Endothelial cell of umbilical vein (primary cell): ENCODE measurements at regions of chr19 and their contacts with region 1.

Region 1: GRCh38 chr19:46728693-46729676 is 12.1 kb upstream of the PRKD2 start:
- DNase-seq: peak; percentile 88
- H3K4me3 ChIP-seq: peak overlapping the region in 1 of 3 experiments; percentile 6
- H3K27ac ChIP-seq: peak overlapping the region; percentile 67
- H3K4me1 ChIP-seq: peaks cover 63% of the 10 kb centered on the region
- H3K27me3 ChIP-seq: no peaks in the 10 kb centered on the region
- CTCF ChIP-seq: peak; percentile 98 to 99
- POLR2A ChIP-seq: no peak

Region 2: DNA sequence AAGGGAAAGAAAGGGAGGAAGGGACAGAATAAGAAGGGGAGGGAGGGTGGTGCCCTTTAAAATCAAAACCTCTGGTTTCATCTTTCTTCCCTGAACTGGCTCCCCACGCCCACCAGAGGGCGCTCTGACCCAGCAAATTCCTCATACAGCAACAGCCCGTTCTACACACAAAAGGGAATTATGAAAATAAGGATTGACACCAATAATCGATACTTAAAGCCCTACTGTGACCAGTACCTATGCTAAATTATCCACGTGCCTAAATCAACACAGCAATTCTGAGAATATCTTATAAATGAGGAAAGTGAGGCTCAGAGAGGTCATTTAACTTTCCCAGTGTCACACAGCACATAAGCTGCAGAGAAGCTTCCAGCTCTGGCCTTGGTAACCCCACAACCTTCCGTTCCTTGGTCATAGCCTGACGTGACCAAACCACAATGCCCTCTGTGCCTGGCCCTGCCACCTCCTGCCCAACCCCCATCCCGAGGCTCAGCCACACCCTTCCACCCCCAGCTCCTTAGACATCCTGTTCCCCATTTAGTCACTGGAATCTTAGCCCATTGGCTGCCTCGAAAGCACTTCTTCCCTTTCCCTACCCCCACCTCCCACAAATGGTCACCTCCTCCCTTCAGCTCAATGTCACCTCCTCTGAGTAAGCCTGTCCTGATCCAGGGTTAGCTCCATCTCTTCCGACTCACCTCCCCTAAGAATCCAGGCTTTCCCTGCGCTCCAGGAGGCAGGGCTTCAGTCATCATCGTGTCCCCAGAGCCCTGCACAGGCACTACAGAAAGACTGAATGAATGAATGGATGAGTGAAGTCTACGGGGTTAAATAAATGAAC is 199.1 kb before region 1 on chr19:
- CTCF ChIA-PET with region 1: interaction called, 10 read pairs
- POLR2A ChIA-PET with region 1: no interaction called
- dilution Hi-C with region 1: no loop called
- intact Hi-C with region 1: no loop called
- DNase-seq: peak; percentile 55
- H3K4me3 ChIP-seq: no peak overlapping the region
- H3K27ac ChIP-seq: no peak overlapping the region
- H3K4me1 ChIP-seq: no peaks in the 10 kb centered on the region
- H3K27me3 ChIP-seq: peaks cover 0 to 1% of the 10 kb centered on the region in 2 experiments
- CTCF ChIP-seq: peak; percentile 86 to 94
- POLR2A ChIP-seq: no peak

Region 3: GRCh38 chr19:46697204-46697960 is 31.6 kb before region 1 on chr19:
- CTCF ChIA-PET with region 1: interaction called, 95 read pairs
- POLR2A ChIA-PET with region 1: no interaction called
- dilution Hi-C with region 1: no loop called
- intact Hi-C with region 1: loop called (anchors 2 kb)
- DNase-seq: peak; percentile 76
- H3K4me3 ChIP-seq: no peak overlapping the region
- H3K27ac ChIP-seq: no peak overlapping the region
- H3K4me1 ChIP-seq: no peaks in the 10 kb centered on the region
- H3K27me3 ChIP-seq: no peaks in the 10 kb centered on the region
- CTCF ChIP-seq: no peak
- POLR2A ChIP-seq: no peak

Region 4: GRCh38 chr19:46717034-46717723 is 11.8 kb before region 1 on chr19 and contains the start of gene PRKD2:
- CTCF ChIA-PET with region 1: interaction called, 74 read pairs
- POLR2A ChIA-PET with region 1: interaction called, 11 read pairs
- dilution Hi-C with region 1: no loop called
- intact Hi-C with region 1: loop called (anchors 1 kb)
- DNase-seq: peak; percentile 84
- H3K4me3 ChIP-seq: peak within 1 kb of the TSS; percentile 76 to 96 (median 85)
- H3K27ac ChIP-seq: peak within 1 kb of the TSS; percentile 57
- H3K4me1 ChIP-seq: peaks cover 38% of the 10 kb centered on the region
- H3K27me3 ChIP-seq: no peaks in the 10 kb centered on the region
- CTCF ChIP-seq: no peak
- POLR2A ChIP-seq: peak; percentile 68
- total RNA-seq, gene PRKD2: 94.9 and 101 TPM in 2 replicates

Region 5: GRCh38 chr19:46753420-46754155 is 24.6 kb after region 1 on chr19:
- CTCF ChIA-PET with region 1: interaction called, 16 read pairs
- POLR2A ChIA-PET with region 1: no interaction called
- dilution Hi-C with region 1: no loop called
- intact Hi-C with region 1: no loop called
- DNase-seq: peak; percentile 41
- H3K4me3 ChIP-seq: no peak overlapping the region
- H3K27ac ChIP-seq: no peak overlapping the region
- H3K4me1 ChIP-seq: peaks cover 27% of the 10 kb centered on the region
- H3K27me3 ChIP-seq: no peaks in the 10 kb centered on the region
- CTCF ChIP-seq: peak; percentile 47 to 53
- POLR2A ChIP-seq: no peak